Posterior cingulate gyrus (tissue), 11 donors: ENCODE measurements at regions of chr1 and their contacts with region 1.

Region 1: DNA sequence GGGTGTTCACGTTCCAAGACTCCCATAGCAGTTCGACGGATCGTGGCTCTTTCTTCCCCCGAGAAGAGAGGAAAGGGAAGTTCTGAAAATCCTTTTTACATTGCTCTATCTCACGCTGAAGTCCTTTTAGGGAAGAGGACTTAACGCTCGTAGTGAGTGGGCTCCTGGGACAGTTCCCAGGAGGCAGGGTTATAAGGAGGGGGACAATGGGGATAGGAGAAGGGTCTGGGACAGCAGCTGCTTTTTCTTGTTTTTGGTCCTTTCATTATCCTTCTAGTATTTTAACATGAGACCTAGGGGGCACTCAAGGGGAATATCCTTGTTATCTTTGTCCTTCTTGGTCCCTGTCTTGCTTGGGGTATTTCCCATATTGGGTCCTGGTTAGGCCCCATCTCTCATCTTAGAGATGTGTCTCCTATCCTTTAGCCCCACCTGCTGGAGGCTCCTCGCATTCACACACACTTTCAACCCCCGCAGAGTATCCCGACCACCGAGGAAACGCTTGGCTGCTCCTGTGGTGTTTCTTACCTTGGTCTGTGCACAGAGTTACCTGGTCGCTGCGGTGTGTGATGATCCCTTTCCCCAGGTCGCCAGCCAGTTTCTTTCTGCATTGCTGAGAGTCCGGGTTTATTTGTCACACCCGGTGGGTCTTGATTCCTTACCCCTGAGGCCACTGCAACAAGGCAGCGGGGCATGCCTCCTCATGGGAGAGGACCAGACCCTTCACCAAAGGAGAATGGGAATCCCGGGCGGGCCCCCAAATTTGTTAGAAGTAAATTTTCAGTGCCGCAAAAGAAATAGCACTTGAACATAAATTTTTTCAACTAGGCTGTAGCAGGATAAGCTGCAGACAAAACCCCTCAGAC is 29.7 kb downstream of the SCCPDH start:
- DNase-seq: peak in 8 of 10 donors; percentile 16 to 90 (median 64)

Region 2: GRCh38 chr1:246497331-246497915 is 256.5 kb before region 1 on chr1:
- intact Hi-C with region 1: loop called (anchors 2 kb)
- DNase-seq: no peak

Region 3: DNA sequence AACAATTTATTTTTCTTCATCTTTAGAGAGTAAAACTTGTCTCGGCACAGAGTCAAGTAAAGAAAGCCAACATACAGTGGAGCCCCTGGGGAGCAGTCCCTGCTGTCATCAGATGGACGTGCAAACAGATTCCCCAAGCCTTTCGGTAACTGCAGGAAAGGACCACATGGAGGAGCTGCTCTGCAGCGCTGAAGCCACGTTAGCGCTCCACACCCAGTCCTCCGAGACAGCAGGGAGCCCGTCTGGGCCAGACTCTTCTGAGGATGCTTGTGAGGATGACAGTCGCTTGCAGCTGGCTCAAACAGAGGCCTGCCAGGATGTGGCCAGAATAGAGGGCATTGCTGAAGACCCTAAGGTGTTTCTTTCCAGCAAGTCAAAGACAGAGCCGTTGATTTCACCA is 106.8 kb before region 1 on chr1:
- intact Hi-C with region 1: loop called (anchors 2 kb)
- DNase-seq: peak; percentile 45 to 97 (median 74)

Region 4: GRCh38 chr1:246689409-246690008 is 64.4 kb before region 1 on chr1:
- intact Hi-C with region 1: loop called (anchors 5 kb)
- DNase-seq: peak; percentile 17 to 94 (median 52)